ENCODE measurements at regions of chr15 and their contacts with region 1.

Region 1: DNA sequence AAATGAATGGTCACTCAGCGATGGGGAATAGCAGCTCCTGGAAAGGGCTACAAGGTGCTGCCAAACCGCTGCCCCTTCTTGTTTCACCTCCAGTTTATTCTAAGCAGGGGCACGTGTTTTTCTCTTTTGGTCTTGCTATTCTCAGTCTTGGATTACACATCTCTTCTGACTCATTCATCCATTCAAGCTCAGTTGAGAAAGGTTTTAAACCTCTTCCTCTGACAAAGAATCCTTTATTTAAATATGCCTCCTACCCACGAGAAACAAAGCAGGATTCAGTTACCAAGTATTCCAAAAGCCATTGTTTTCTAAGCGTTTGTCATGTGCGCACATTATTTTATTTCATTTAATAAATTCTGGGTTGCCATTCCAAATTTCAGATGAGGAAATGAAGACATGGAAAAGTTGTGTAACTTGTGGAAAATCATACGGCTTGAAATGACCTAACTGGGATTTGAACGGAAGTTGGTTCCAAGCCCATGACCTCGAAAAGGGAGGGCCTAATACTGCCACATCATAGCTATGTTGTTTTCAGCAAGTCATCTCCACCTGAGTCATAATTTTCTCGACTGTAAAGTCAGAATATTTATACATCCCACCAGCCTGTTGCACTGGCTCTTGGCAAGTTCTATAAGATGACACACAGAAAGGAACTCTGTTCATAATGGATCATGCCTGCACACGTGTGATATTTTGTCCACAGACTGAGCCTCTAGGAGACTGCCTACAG is 292.0 kb upstream of the SLCO3A1 start:
- DNase-seq: peak; percentile 47 to 55
- ATAC-seq: peak; percentile 89 to 95 (median 93)
- H3K4me3 ChIP-seq: no peak overlapping the region
- H3K27ac ChIP-seq: peak overlapping the region; percentile 72
- H3K4me1 ChIP-seq: peaks cover 6% of the 10 kb centered on the region
- H3K27me3 ChIP-seq: no peaks in the 10 kb centered on the region
- CTCF ChIP-seq: no peak

Region 2: GRCh38 chr15:91537856-91538255 is 23.7 kb before region 1 on chr15:
- intact Hi-C with region 1: loop called in 1 of 2 experiments (anchors 2 kb)
- DNase-seq: no peak
- ATAC-seq: no peak
- H3K4me3 ChIP-seq: no peak overlapping the region
- H3K27ac ChIP-seq: peak overlapping the region; percentile 84
- H3K4me1 ChIP-seq: peaks cover 53% of the 10 kb centered on the region
- H3K27me3 ChIP-seq: no peaks in the 10 kb centered on the region
- CTCF ChIP-seq: no peak

Region 3: GRCh38 chr15:91769894-91770293 is 208.4 kb after region 1 on chr15:
- intact Hi-C with region 1: no loop called
- DNase-seq: no peak
- ATAC-seq: no peak
- H3K4me3 ChIP-seq: no peak overlapping the region
- H3K27ac ChIP-seq: no peak overlapping the region
- H3K4me1 ChIP-seq: no peaks in the 10 kb centered on the region
- H3K27me3 ChIP-seq: peaks cover 2 to 16% (median 3%) of the 10 kb centered on the region in 3 donors
- CTCF ChIP-seq: no peak